Ascending aorta (tissue), 2 donors: ENCODE measurements at regions of chr22 and their contacts with region 1.

Region 1: DNA sequence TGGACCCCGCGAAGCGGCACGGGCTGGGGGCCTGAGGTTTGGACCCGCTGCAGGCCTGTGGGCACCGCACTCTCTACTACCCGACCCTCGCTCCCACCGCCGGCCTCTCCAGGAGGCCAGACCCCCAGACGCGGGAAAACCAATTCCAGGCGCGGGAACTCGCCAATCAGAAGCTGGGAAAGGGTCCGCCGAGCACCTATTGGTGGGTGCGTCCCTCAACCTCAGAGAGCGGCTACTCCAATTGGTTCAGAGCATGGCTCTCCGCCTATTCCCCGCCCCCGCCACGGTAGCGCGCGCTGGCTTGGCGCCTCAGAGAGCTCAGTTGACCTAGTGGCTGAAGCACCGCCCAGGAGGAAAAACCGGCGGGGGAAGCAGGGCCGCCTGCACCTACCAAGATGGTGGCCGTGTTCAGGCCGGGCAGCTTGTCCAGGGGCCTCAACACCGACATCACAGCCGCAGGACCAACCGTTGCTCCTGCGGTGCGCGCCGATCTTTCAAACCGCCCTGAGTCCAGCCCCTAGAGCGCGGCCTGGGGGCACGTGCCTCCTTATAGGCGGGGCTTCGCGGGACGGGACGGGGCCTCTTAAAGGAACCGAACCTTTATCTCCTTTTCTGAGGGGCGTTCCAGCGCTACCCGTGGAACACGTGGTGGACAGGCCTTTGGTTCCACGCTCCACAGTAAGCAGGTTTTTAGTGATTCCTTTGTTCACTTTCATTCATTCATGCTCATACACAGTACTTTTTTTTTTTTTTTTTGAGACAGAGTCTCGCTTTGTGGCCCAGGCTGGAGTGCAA is at the start of gene CENPM:
- DNase-seq: peak; percentile 70 to 93
- H3K4me3 ChIP-seq: peak within 1 kb of the TSS; percentile 64 to 75
- H3K27ac ChIP-seq: no peak within 1 kb of the TSS
- H3K4me1 ChIP-seq: peaks cover 0 to 8% of the 10 kb centered on the region in 2 donors
- H3K27me3 ChIP-seq: no peaks in the 10 kb centered on the region
- CTCF ChIP-seq: no peak
- total RNA-seq, gene CENPM: not detected

Region 2: GRCh38 chr22:41832553-41833368 is 114.1 kb before region 1 on chr22 and contains the start of gene SREBF2:
- intact Hi-C with region 1: loop called (anchors 2 kb)
- DNase-seq: peak; percentile 99 to 100
- H3K4me3 ChIP-seq: peak within 1 kb of the TSS; percentile 90 to 97
- H3K27ac ChIP-seq: peak within 1 kb of the TSS; percentile 92
- H3K4me1 ChIP-seq: peaks cover 0 to 5% of the 10 kb centered on the region in 2 donors
- H3K27me3 ChIP-seq: no peaks in the 10 kb centered on the region
- CTCF ChIP-seq: peak in 1 of 3 experiments; percentile 8
- total RNA-seq, gene SREBF2: 46.1 TPM

Region 3: DNA sequence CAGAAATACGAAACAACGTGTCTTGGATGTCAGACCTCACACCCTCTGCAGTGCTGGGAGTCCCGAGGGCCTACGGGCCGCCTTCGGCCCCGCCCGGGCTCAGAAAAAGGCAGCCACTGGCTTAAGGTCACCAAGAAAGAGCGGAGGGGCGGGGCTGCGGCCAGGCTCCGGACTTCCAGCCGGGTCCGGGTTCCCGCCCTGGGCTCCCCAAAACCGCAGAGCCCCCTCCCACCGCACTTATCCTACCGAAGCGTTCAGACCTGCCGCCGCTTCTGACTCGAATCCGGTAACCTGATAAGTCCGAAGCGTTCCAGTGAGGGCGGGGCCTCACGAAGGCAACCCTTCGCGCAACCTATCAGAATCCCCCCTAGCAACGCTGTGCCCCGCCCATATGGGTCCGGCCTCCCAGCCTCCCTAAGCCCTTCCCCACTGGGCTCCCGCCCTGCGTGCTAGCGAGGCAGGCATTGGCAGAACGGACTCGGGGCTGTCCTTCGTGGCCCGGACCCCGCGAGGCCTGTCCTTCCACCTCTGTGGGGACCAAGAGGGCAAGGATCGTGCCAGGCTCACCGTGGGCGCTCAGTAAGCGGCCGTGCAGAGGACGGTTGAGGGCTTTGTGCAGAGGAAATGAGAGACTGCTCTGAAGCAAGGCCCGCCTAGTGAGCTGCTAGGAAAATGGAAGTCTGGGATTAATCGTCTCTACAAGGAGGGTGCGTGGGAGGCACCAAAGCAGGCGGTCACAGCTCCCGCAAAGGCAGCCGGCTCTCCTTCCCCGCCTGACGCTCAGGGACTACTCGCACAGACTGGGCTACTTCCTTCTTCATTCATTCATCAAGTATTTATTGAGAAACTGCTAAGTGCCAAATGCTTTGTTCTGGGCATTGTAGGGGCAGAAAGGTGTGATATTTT is 123.9 kb after region 1 on chr22 and contains the start of gene NAGA:
- intact Hi-C with region 1: loop called (anchors 5 kb)
- DNase-seq: peak; percentile 91 to 98
- H3K4me3 ChIP-seq: peak within 1 kb of the TSS; percentile 46 to 73
- H3K27ac ChIP-seq: peak within 1 kb of the TSS; percentile 81 to 84
- H3K4me1 ChIP-seq: peaks cover 0 to 28% of the 10 kb centered on the region in 2 donors
- H3K27me3 ChIP-seq: no peaks in the 10 kb centered on the region
- CTCF ChIP-seq: no peak
- total RNA-seq, gene NAGA: 52.3 TPM